Heart right ventricle (tissue), 16 donors: ENCODE measurements at regions of chr22 and their contacts with region 1.

Region 1: DNA sequence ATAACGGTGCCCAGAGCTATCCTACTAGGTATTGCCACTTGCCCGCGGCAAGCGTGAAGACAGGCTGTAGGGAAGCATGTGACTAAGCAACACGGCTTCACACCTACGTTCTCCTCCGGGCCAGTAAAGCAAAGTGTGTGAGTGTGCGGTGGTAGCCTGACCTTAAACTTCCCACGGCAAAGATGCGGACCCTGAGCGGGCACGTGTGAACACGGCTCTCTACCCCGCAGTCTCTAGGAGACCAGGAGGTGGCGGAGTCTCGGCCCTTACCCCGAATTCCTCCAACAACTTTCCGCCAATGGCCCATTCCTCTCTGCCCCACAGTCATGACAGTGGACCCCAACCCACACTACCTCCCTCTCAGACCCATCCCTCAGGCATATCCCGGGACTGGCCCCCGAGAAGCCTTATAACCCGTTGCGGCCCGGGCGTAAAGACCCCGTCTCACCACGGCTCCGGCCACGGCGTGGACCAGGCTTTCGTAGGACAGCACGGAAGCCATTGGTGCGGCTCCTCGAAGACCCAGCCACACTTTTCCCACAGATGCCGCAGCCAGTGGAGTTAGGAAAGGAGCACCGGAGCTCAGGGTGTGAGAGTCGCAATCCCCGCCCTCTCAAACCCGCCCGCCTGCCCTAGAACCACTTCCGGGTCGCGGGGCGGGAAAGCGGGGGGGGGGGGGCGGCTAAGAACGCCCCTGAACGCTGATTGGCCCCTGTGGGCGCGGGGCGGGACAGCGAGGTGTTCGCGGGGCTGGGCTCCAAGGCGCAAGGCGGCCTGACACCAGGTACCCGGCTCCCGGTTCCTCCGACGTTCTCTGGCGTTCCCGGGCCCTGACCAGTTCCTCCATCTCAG is at the start of gene SLC25A17:
- DNase-seq: peak; percentile 89 to 90
- ATAC-seq: peak; percentile 98 to 99 (median 98)
- H3K4me3 ChIP-seq: peak within 1 kb of the TSS; percentile 75 to 99 (median 90)
- H3K27ac ChIP-seq: peak within 1 kb of the TSS in 9 of 10 donors; percentile 48 to 89 (median 74)
- H3K4me1 ChIP-seq: peaks cover 3 to 34% (median 27%) of the 10 kb centered on the region in 9 donors
- H3K27me3 ChIP-seq: no peaks in the 10 kb centered on the region
- CTCF ChIP-seq: peak in 7 of 9 donors; percentile 23 to 59 (median 50)
- total RNA-seq, gene SLC25A17: 2.5 to 5.6 (median 4.0) TPM

Region 2: DNA sequence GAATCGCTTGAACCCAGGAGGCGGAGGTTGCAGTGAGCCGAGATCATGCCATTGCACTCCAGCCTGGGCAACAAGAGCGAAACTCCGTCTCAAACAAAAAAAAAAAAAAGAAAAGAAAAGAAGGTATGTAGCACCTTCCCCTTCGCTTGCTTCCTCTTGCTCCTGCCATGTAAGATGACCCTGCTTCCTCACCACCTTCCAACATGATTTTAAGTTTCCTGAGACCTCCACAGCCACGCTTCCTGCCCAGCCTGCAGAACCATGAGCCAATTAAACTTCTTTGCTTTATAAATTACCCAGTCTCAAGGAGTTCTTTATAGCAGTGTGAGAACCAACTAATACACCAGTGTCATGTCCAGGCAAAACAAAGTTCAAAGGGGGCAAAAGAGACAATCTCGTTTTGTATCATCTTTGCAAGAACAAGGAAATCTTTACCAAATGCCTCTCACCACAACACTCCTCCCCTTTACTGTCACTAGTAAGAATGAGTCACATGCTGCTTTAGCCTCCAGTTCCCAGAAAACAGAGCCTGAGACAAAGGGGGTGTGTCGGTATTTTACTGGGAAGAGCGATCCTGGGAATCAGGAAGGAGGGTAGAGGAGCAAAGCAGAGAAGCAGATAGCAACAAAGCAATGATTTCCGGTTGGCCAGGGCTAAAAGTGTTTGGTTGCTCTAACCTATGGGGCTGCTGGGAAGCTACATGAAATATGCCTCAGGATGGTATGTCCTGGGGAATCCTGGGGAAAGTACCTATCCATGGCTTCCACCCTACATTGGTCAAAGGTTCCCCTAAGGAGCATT is 150.2 kb before region 1 on chr22:
- intact Hi-C with region 1: loop called in 1 of 10 experiments (anchors 5 kb)
- DNase-seq: no peak
- ATAC-seq: peak in 3 of 8 donors; percentile 17 to 25 (median 22)
- H3K4me3 ChIP-seq: no peak overlapping the region
- H3K27ac ChIP-seq: peak overlapping the region in 9 of 10 donors; percentile 4 to 88 (median 31)
- H3K4me1 ChIP-seq: peaks cover 9 to 62% (median 43%) of the 10 kb centered on the region in 9 donors
- H3K27me3 ChIP-seq: no peaks in the 10 kb centered on the region
- CTCF ChIP-seq: no peak

Region 3: DNA sequence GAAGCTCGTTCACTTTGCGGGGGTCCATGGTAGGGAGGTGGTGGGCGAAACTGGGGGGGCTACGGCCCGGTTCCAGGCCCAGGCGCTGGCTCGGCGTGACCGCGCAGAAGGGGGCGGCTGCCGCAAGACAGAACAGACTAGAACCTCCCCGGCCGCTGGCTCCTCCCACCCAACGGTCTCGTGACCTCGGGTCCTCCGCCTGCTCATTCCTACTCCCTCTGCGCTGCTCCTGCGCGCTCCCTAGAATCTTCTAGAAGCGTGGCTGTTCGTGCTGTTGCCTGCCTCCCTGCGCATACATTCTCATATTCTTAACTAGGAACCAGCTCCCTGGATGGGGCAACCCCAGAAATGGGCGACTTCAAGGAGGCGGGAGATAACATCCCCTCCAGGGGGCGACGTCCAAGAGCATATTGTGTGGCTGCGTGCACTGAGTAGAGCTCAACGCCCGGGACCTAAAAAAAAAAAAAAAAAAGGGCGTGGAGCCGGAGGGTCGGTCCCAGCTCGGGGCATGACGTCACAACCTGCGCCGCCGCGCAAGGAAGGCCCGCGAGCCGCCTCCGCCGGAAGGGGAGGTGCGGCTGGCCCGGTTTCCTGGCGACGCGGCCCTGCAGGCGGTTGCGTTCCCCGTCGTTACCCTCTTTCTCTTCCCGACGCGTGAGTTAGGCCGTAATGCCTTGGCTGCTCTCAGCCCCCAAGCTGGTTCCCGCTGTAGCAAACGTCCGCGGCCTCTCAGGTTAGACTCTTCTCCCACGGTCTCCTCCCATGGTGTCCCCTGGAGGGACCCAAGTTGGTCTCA is 37.7 kb after region 1 on chr22 and contains the starts of genes ST13 and XPNPEP3:
- intact Hi-C with region 1: loop called in 1 of 10 experiments (anchors 5 kb)
- DNase-seq: peak; percentile 97 to 98
- ATAC-seq: peak; percentile 97 to 99 (median 99)
- H3K4me3 ChIP-seq: peak within 1 kb of the TSS; percentile 68 to 94 (median 88)
- H3K27ac ChIP-seq: peak within 1 kb of the TSS; percentile 92 to 98 (median 96)
- H3K4me1 ChIP-seq: peaks cover 13 to 65% (median 53%) of the 10 kb centered on the region in 9 donors
- H3K27me3 ChIP-seq: no peaks in the 10 kb centered on the region
- CTCF ChIP-seq: peak in 4 of 9 donors; percentile 14 to 42 (median 27)
- total RNA-seq, gene ST13: 170 to 238 (median 215) TPM
- total RNA-seq, gene XPNPEP3: 20.0 to 31.7 (median 26.3) TPM